CD4-positive, alpha-beta memory T cell (primary cell): ENCODE measurements at regions of chr2 and their contacts with region 1.

Region 1: GRCh38 chr2:64914735-64915509 is 74.3 kb upstream of the SLC1A4 start:
- DNase-seq: no peak
- H3K4me3 ChIP-seq: no peak overlapping the region
- H3K4me3 Mint-ChIP-seq: no peak overlapping the region
- H3K27ac ChIP-seq: no peak overlapping the region
- H3K27ac Mint-ChIP-seq: peak overlapping the region in 1 of 7 donors; percentile 43
- H3K4me1 ChIP-seq: peaks cover 10% of the 10 kb centered on the region
- H3K4me1 Mint-ChIP-seq: peaks cover 6 to 21% (median 10%) of the 10 kb centered on the region in 4 donors
- H3K27me3 ChIP-seq: no peaks in the 10 kb centered on the region
- H3K27me3 Mint-ChIP-seq: peaks cover 0 to 1% of the 10 kb centered on the region in 2 donors

Region 2: DNA sequence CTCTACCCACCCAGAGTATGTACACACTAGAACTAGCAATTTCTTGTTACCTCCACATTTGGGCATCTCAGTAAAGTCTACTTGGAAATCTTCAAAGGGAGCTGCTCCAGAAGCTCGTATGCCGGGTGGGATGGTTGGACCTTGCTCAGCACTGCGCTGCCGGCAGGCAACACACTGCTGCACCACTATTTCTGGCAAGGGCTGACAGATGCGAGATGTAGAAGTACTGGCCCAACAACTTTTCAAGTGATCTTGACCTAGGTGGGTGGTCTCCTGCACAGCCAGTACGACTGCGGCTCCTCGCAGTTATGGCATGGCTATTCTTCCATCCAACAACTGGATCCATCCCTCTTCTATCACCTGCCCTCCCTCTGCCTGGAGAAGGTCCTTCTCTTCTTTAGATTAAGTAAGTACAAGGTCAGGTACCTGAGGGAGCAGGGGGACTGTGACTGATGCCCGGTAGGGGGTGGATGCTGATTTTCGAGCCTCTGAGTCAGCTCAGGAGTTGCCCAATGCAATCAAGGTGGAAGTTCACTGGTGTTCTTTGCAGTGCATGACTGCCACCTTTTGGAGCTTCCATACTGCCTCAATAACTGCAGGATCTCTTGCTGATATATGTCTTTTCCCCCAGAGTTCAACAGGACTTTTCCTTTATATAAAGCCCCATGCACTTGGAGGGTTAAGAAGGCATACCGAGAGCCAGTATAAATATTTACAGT is 26.2 kb before region 1 on chr2:
- CTCF ChIA-PET with region 1: no interaction called
- POLR2A ChIA-PET with region 1: no interaction called
- intact Hi-C with region 1: no loop called
- DNase-seq: no peak
- H3K4me3 ChIP-seq: no peak overlapping the region
- H3K4me3 Mint-ChIP-seq: no peak overlapping the region
- H3K27ac ChIP-seq: no peak overlapping the region
- H3K27ac Mint-ChIP-seq: no peak overlapping the region
- H3K4me1 ChIP-seq: no peaks in the 10 kb centered on the region
- H3K4me1 Mint-ChIP-seq: no peaks in the 10 kb centered on the region
- H3K27me3 ChIP-seq: no peaks in the 10 kb centered on the region
- H3K27me3 Mint-ChIP-seq: peaks cover 5 to 7% of the 10 kb centered on the region in 2 donors

Region 3: GRCh38 chr2:64988420-64989125 is 73.7 kb after region 1 on chr2:
- CTCF ChIA-PET with region 1: interaction called, 7 read pairs
- POLR2A ChIA-PET with region 1: interaction called, 4 read pairs
- intact Hi-C with region 1: loop called (anchors 5 kb)
- DNase-seq: peak in 4 of 5 donors; percentile 53 to 76 (median 60)
- H3K4me3 ChIP-seq: peak overlapping the region; percentile 52 to 56
- H3K4me3 Mint-ChIP-seq: peak overlapping the region; percentile 84 to 91 (median 89)
- H3K27ac ChIP-seq: peak overlapping the region; percentile 48
- H3K27ac Mint-ChIP-seq: peak overlapping the region; percentile 38 to 93 (median 71)
- H3K4me1 ChIP-seq: peaks cover 32% of the 10 kb centered on the region
- H3K4me1 Mint-ChIP-seq: peaks cover 16 to 44% (median 33%) of the 10 kb centered on the region in 4 donors
- H3K27me3 ChIP-seq: no peaks in the 10 kb centered on the region
- H3K27me3 Mint-ChIP-seq: no peaks in the 10 kb centered on the region

Region 4: GRCh38 chr2:65031341-65032018 is 116.6 kb after region 1 on chr2:
- CTCF ChIA-PET with region 1: interaction called, 165 read pairs
- POLR2A ChIA-PET with region 1: interaction called, 7 read pairs
- intact Hi-C with region 1: loop called (anchors 2 kb)
- DNase-seq: peak in 1 of 5 donors; percentile 10
- H3K4me3 ChIP-seq: peak overlapping the region in 1 of 2 donors; percentile 13
- H3K4me3 Mint-ChIP-seq: peak overlapping the region; percentile 39 to 75 (median 65)
- H3K27ac ChIP-seq: peak overlapping the region; percentile 49
- H3K27ac Mint-ChIP-seq: peak overlapping the region; percentile 33 to 92 (median 73)
- H3K4me1 ChIP-seq: peaks cover 30% of the 10 kb centered on the region
- H3K4me1 Mint-ChIP-seq: peaks cover 23 to 26% (median 24%) of the 10 kb centered on the region in 4 donors
- H3K27me3 ChIP-seq: no peaks in the 10 kb centered on the region
- H3K27me3 Mint-ChIP-seq: no peaks in the 10 kb centered on the region

Region 5: GRCh38 chr2:65040400-65041261 is 125.7 kb after region 1 on chr2:
- CTCF ChIA-PET with region 1: interaction called, 165 read pairs
- POLR2A ChIA-PET with region 1: interaction called, 8 read pairs
- intact Hi-C with region 1: loop called (anchors 1 kb)
- DNase-seq: peak; percentile 67 to 74 (median 69)
- H3K4me3 ChIP-seq: no peak overlapping the region
- H3K4me3 Mint-ChIP-seq: peak overlapping the region in 2 of 8 donors; percentile 38 to 76
- H3K27ac ChIP-seq: no peak overlapping the region
- H3K27ac Mint-ChIP-seq: no peak overlapping the region
- H3K4me1 ChIP-seq: peaks cover 8% of the 10 kb centered on the region
- H3K4me1 Mint-ChIP-seq: peaks cover 4 to 11% (median 8%) of the 10 kb centered on the region in 4 donors
- H3K27me3 ChIP-seq: no peaks in the 10 kb centered on the region
- H3K27me3 Mint-ChIP-seq: no peaks in the 10 kb centered on the region

Region 6: DNA sequence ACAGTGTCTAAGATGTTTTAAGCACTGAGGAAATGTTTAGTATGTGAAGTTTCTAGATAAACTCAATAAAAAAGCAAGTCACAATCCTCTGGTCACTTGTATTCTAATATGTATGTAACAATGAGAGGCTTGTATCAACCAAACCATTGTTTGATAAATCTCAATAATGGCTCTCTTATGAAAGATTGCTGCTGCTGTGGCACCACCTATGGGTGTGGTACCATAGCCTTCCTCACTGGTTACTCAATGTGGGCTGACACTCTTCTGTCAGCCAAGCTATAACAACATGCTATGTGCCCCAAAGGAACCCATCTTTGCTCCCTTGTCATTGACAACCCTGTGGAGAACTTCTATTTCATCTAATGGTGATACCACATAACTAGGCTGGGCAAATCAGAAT is 227.6 kb after region 1 on chr2:
- CTCF ChIA-PET with region 1: interaction called, 3 read pairs
- POLR2A ChIA-PET with region 1: no interaction called
- intact Hi-C with region 1: loop called (anchors 1 kb)
- DNase-seq: no peak
- H3K4me3 ChIP-seq: no peak overlapping the region
- H3K4me3 Mint-ChIP-seq: no peak overlapping the region
- H3K27ac ChIP-seq: no peak overlapping the region
- H3K27ac Mint-ChIP-seq: no peak overlapping the region
- H3K4me1 ChIP-seq: no peaks in the 10 kb centered on the region
- H3K4me1 Mint-ChIP-seq: no peaks in the 10 kb centered on the region
- H3K27me3 ChIP-seq: no peaks in the 10 kb centered on the region
- H3K27me3 Mint-ChIP-seq: peaks cover 2 to 17% of the 10 kb centered on the region in 2 donors

Region 7: DNA sequence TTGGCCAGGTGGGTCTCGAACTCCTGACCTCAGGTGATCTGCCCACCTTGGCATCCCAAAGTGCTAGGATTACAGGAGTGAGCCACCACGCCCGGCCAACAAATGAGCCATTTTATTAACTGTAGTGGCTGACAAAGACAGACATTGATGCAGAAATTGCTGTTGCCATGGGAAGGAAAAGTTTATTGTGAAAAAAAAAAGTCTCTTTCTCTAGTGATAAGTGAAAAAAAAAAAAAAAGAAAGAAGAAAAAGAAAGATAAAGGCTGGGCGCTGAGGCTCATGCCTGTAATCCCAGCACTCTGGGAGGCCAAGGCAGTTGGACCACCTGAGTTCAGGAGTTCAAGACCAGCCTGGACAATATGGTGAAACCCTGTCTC is 254.8 kb after region 1 on chr2:
- CTCF ChIA-PET with region 1: interaction called, 43 read pairs
- POLR2A ChIA-PET with region 1: no interaction called
- intact Hi-C with region 1: loop called (anchors 1 kb)
- DNase-seq: no peak
- H3K4me3 ChIP-seq: no peak overlapping the region
- H3K4me3 Mint-ChIP-seq: no peak overlapping the region
- H3K27ac ChIP-seq: no peak overlapping the region
- H3K27ac Mint-ChIP-seq: no peak overlapping the region
- H3K4me1 ChIP-seq: no peaks in the 10 kb centered on the region
- H3K4me1 Mint-ChIP-seq: no peaks in the 10 kb centered on the region
- H3K27me3 ChIP-seq: no peaks in the 10 kb centered on the region
- H3K27me3 Mint-ChIP-seq: no peaks in the 10 kb centered on the region

Region 8: GRCh38 chr2:65186872-65187851 is 272.2 kb after region 1 on chr2:
- CTCF ChIA-PET with region 1: interaction called, 10 read pairs
- POLR2A ChIA-PET with region 1: no interaction called
- intact Hi-C with region 1: loop called (anchors 1 kb)
- DNase-seq: peak; percentile 49 to 59 (median 53)
- H3K4me3 ChIP-seq: no peak overlapping the region
- H3K4me3 Mint-ChIP-seq: peak overlapping the region in 2 of 8 donors; percentile 1 to 14
- H3K27ac ChIP-seq: no peak overlapping the region
- H3K27ac Mint-ChIP-seq: no peak overlapping the region
- H3K4me1 ChIP-seq: peaks cover 9% of the 10 kb centered on the region
- H3K4me1 Mint-ChIP-seq: peaks cover 0 to 8% (median 8%) of the 10 kb centered on the region in 4 donors
- H3K27me3 ChIP-seq: peaks cover 4% of the 10 kb centered on the region
- H3K27me3 Mint-ChIP-seq: peaks cover 5 to 17% of the 10 kb centered on the region in 2 donors